Right ventricle myocardium superior (tissue), 1 donor: ENCODE measurements at regions of chr14 and their contacts with region 1.

Region 1: DNA sequence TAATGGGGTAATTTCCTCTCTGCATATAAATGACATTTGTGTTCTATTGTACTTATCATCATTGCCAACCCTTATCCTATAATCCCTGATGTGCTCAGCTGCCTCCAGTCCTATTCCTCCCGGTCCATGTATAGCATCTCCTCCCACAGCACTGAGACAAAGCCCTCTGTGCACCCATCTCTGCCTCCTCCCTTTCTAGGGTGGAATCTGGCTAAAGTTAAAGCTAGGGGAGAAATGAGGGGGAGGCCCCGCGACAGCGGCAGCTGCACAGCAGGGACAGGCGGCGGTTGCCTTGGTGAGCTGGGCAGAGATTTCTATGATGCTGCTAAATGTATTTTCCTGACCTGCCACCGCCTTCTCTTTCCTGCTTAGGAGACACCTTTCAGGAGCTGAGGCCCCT is 12.8 kb upstream of the ZDHHC22 start:
- DNase-seq: no peak
- ATAC-seq: no peak

Region 2: DNA sequence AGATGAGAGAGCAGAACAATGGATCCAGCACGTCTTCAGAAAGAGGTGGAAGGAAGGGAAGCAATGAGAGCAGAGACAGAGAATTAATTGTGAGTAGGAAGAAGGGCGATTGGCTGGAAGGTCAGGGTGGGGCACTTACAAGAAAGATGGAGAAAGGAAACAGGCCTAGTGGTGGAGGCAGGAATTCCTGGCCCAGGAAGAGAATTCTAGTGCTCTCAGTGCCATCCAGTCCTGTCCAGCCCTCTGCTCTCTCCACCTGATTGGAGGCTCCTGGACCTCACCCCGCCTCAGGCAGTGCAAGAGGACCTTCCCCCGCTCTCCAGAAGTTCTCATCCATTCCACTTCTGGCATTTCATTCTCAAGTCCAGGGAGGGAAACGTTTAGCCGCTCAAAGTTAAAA is 73.6 kb after region 1 on chr14:
- intact Hi-C with region 1: no loop called
- DNase-seq: no peak
- ATAC-seq: no peak

Region 3: GRCh38 chr14:77314043-77314442 is 159.6 kb after region 1 on chr14:
- intact Hi-C with region 1: loop called (anchors 2 kb)
- DNase-seq: no peak
- ATAC-seq: no peak